ENCODE measurements at regions of chr11 and their contacts with region 1.

Region 1: DNA sequence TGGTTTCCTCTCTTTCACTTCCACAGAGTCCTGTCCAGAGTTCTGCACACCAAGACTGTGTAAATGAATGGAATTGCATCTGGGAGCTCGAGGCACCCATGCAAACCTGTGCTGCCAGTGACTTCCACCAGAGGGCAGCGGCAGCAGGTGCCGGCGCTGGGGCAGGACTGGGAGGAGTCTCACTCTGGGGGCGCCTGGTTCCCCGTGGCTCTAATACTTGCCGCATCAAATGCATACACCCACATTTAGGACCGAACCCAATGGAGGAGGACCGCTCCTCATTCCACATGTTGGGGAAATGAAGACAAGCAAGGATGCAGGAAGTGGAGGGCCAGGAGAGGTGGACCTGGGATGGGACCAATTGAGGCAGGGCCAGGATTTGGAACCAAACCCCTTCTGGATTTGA is 1.1 kb upstream of the CD6 start:
- DNase-seq: peak; percentile 70
- H3K4me3 Mint-ChIP-seq: peak overlapping the region; percentile 51
- H3K27ac Mint-ChIP-seq: no peak overlapping the region
- H3K4me1 Mint-ChIP-seq: peaks cover 29% of the 10 kb centered on the region
- H3K27me3 Mint-ChIP-seq: peaks cover 5% of the 10 kb centered on the region

Region 2: GRCh38 chr11:60951899-60952741 is 18.3 kb before region 1 on chr11 and contains the start of gene SLC15A3:
- intact Hi-C with region 1: no loop called
- DNase-seq: no peak
- H3K4me3 Mint-ChIP-seq: peak within 1 kb of the TSS; percentile 61
- H3K27ac Mint-ChIP-seq: peak within 1 kb of the TSS; percentile 28
- H3K4me1 Mint-ChIP-seq: peaks cover 7% of the 10 kb centered on the region
- H3K27me3 Mint-ChIP-seq: peaks cover 31% of the 10 kb centered on the region
- total RNA-seq, gene SLC15A3: 2.1 and 2.2 TPM in 2 replicates

Region 3: DNA sequence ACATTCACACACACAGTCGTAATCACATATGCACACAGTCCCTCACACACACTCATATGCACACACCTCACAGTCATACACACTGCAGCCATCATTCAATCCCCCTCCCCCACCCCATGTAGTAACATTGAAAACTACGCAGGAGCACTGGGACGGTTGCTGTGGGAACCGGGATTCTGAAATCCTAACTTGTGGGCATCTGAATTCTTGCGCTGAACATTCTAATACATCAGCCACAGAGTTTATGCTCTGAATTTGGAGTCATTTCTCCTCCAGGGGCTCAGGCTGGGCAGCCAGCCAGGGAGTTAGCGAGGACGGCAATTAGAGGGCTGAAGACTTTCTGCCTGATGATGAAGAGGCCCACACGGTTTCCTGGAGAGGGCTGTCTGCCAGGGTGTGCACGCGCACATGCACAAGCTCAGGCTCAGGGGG is 33.8 kb after region 1 on chr11:
- intact Hi-C with region 1: loop called (anchors 2 kb)
- DNase-seq: no peak
- H3K4me3 Mint-ChIP-seq: peak overlapping the region; percentile 71
- H3K27ac Mint-ChIP-seq: peak overlapping the region; percentile 73
- H3K4me1 Mint-ChIP-seq: peaks cover 62% of the 10 kb centered on the region
- H3K27me3 Mint-ChIP-seq: no peaks in the 10 kb centered on the region

Region 4: GRCh38 chr11:61021661-61022212 is 51.4 kb after region 1 on chr11:
- intact Hi-C with region 1: loop called (anchors 2 kb)
- DNase-seq: peak; percentile 77
- H3K4me3 Mint-ChIP-seq: peak overlapping the region; percentile 66
- H3K27ac Mint-ChIP-seq: peak overlapping the region; percentile 92
- H3K4me1 Mint-ChIP-seq: peaks cover 68% of the 10 kb centered on the region
- H3K27me3 Mint-ChIP-seq: no peaks in the 10 kb centered on the region

Region 5: GRCh38 chr11:61129639-61130523 is 159.5 kb after region 1 on chr11:
- intact Hi-C with region 1: loop called (anchors 1 kb)
- DNase-seq: peak; percentile 84
- H3K4me3 Mint-ChIP-seq: peak overlapping the region; percentile 5
- H3K27ac Mint-ChIP-seq: peak overlapping the region; percentile 34
- H3K4me1 Mint-ChIP-seq: peaks cover 23% of the 10 kb centered on the region
- H3K27me3 Mint-ChIP-seq: no peaks in the 10 kb centered on the region

Region 6: GRCh38 chr11:61187505-61188130 is 217.2 kb after region 1 on chr11:
- intact Hi-C with region 1: loop called (anchors 1 kb)
- DNase-seq: peak; percentile 62
- H3K4me3 Mint-ChIP-seq: no peak overlapping the region
- H3K27ac Mint-ChIP-seq: no peak overlapping the region
- H3K4me1 Mint-ChIP-seq: peaks cover 5% of the 10 kb centered on the region
- H3K27me3 Mint-ChIP-seq: peaks cover 16% of the 10 kb centered on the region

Measured in activated T-helper 2 cell treated with anti-CD3 and anti-CD28 coated beads, Interferon-gamma antibody, Interleukin-2, Interleukin-4, amounts not matched to agents 10 μg/mL and 5 μg/mL and 100 μg/mL, durations not matched to agents 14 hours and 24 hours and 36 hours (primary cell).